ENCODE measurements at regions of chr19 and their contacts with region 1.

Region 1: GRCh38 chr19:37655689-37656371 is 565 bp upstream of the ZFP30 start:
- DNase-seq: peak; percentile 80
- ATAC-seq: peak; percentile 88
- H3K4me3 ChIP-seq: peak overlapping the region; percentile 87 to 97 (median 93)
- H3K27ac ChIP-seq: peak overlapping the region; percentile 94
- H3K4me1 ChIP-seq: peaks cover 15% of the 10 kb centered on the region
- H3K27me3 ChIP-seq: no peaks in the 10 kb centered on the region; a peak in 1 of 5 replicates
- CTCF ChIP-seq: peak; percentile 39
- EP300 ChIP-seq: no peak
- POLR2A ChIP-seq: peak; percentile 63 to 74
- RAD21 ChIP-seq: no peak

Region 2: DNA sequence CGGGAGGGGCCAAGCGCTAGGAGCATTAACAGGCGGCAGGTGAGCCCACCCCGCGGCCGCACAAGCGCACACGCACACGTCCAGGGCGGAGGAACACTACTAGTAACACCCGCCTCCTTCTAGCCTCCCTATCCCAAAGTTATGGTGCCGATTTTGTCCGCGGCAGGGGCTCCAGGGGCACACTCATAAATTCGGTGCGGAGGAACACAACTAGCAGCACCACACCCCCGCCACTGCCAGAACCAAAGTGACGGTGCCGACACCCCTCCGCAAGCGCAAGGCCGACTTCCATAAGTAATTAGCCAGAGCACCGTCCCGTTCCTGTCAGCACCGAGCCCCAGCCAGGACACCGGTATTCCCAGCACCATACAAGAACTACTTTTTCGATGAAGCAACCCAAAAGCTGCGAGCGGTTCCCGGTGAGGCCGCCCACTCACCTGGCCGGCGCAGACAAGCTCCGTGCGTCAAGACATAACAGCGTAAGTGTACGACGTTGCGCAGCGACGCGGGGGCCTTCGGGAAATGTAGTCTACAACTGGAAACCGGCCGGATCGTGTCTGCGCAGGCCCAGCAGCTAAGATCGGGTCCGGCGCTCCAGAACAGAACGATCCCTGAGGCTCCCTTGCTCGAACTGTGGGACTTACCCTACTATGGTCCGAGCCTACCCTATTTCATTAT is 61.4 kb before region 1 on chr19 and contains the starts of genes ZNF540 and ZNF571:
- CTCF ChIA-PET with region 1: no interaction called
- POLR2A ChIA-PET with region 1: interaction called, 11 read pairs
- in situ Hi-C with region 1: no loop called
- intact Hi-C with region 1: loop called (anchors 5 kb)
- DNase-seq: peak; percentile 90
- ATAC-seq: peak; percentile 99
- H3K4me3 ChIP-seq: peak within 1 kb of the TSS; percentile 70 to 96 (median 88)
- H3K27ac ChIP-seq: peak within 1 kb of the TSS; percentile 73
- H3K4me1 ChIP-seq: peaks cover 14% of the 10 kb centered on the region; the same call in 1 of the 2 replicates
- H3K27me3 ChIP-seq: no peaks in the 10 kb centered on the region; a peak in 1 of 5 replicates
- CTCF ChIP-seq: no peak
- EP300 ChIP-seq: no peak
- POLR2A ChIP-seq: peak; percentile 48 to 57
- RAD21 ChIP-seq: no peak
- total RNA-seq, gene ZNF540: 0.21 and 0.40 TPM in 2 replicates
- total RNA-seq, gene ZNF571: 1.9 and 4.0 TPM in 2 replicates

Region 3: DNA sequence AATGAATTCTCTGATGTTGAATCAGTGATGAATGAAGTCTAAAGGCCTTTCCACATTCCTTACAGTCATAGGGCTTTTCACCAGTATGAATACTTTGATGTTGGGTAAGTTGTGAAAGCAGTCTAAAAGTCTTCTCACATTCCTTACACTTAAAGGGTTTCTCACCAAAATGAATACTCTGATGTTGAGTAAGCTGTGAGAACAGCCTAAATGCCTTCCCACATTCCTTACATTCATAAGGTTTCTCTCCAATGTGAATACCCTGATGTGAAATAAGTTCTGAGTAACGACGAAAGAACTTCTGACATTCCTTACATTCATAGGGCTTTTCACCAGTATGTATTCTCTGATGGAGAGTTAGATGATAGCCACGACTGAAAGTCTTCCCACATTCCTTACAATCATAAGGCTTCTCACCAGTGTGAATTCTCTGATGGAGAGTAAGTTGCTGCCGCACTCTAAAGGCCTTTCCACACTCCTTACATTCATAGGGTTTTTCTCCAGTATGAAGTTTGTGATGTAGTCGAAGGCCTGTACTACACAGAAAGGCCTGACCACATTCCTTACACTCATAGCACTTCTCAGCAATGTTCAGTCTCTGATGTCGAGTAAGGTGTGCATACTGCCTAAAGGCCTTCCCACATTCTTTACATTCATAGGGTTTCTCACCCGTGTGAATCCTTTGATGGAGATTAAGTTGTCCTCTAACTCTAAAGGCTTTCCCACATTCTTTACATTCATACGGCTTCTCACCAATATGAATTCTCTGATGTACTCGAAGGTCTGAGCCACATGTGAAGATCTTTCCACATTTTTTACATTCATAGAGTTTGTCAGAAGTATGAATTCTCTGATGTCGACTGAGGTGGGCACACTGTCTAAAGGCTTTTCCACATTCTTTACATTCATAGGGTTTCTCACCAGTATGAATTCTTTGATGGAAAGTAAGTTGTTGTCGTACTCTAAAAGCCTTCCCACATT is 20.5 kb before region 1 on chr19:
- CTCF ChIA-PET with region 1: no interaction called
- POLR2A ChIA-PET with region 1: no interaction called
- in situ Hi-C with region 1: no loop called
- intact Hi-C with region 1: no loop called
- DNase-seq: no peak
- ATAC-seq: no peak
- H3K4me3 ChIP-seq: no peak overlapping the region
- H3K27ac ChIP-seq: no peak overlapping the region
- H3K4me1 ChIP-seq: no peaks in the 10 kb centered on the region
- H3K27me3 ChIP-seq: no peaks in the 10 kb centered on the region
- CTCF ChIP-seq: no peak
- EP300 ChIP-seq: no peak
- POLR2A ChIP-seq: no peak
- RAD21 ChIP-seq: no peak

Region 4: DNA sequence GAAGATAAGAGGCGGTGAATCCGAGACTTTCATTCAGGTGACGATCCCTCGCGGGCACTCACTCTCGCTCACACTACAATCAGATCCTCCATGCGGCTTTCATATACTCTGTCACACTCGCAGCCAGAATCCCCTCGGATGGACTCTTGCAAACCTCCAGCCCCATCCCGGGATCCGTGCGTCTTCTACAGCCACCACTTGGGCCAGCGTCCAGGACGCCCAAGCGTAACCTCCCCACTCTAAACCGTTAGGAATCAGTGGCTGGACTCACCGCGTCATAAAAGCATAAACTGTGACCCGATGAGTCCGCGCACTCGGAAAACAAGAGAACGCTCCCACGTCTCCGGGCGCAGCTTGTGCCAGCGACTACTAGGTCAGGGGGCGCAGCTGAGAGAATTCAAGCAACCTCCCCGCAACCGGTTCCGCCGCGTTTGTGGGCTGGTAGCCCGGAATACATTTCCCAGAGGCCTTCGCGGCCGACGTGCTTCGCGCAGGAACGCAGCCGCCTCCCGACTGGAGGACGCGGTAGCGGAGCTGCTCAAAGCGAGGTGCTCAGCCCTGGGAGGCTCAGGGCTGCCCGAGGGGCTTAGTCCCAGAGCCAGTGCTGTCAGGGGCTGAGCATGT is 36.2 kb after region 1 on chr19:
- CTCF ChIA-PET with region 1: no interaction called
- POLR2A ChIA-PET with region 1: interaction called, 8 read pairs
- in situ Hi-C with region 1: no loop called
- intact Hi-C with region 1: loop called (anchors 1 kb)
- DNase-seq: peak; percentile 87
- ATAC-seq: peak; percentile 97
- H3K4me3 ChIP-seq: peak overlapping the region; percentile 71 to 79 (median 78)
- H3K27ac ChIP-seq: peak overlapping the region; percentile 84
- H3K4me1 ChIP-seq: peaks cover 10% of the 10 kb centered on the region; the same call in 1 of the 2 replicates
- H3K27me3 ChIP-seq: no peaks in the 10 kb centered on the region; a peak in 1 of 5 replicates
- CTCF ChIP-seq: peak; percentile 69
- EP300 ChIP-seq: no peak
- POLR2A ChIP-seq: peak; percentile 61 to 90
- RAD21 ChIP-seq: peak; percentile 45; the same call in 1 of the 2 replicates

Region 5: GRCh38 chr19:37725181-37725580 is 69.4 kb after region 1 on chr19:
- CTCF ChIA-PET with region 1: no interaction called
- POLR2A ChIA-PET with region 1: no interaction called
- in situ Hi-C with region 1: no loop called
- intact Hi-C with region 1: no loop called
- DNase-seq: no peak
- ATAC-seq: no peak
- H3K4me3 ChIP-seq: no peak overlapping the region
- H3K27ac ChIP-seq: no peak overlapping the region
- H3K4me1 ChIP-seq: no peaks in the 10 kb centered on the region
- H3K27me3 ChIP-seq: no peaks in the 10 kb centered on the region
- CTCF ChIP-seq: no peak
- EP300 ChIP-seq: no peak
- POLR2A ChIP-seq: no peak
- RAD21 ChIP-seq: no peak

Region 6: DNA sequence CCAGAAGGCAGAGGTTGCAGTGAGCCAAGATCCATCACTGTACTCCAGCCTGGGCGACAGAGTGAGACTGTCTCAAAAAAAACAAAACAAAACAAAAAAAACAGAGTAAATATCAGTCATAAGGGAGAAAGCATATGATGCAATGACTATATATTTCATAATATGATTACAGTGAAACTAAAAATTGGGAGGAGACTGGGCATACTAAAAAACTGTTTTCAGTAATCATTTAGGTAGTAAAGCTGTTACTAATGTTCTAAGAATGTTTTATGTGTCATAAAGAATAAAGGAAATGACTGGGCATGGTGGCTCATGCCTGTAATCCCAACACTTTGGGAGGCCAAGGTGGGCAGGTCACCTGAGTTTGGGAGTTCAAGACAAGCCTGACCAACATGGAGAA is 107.7 kb after region 1 on chr19:
- CTCF ChIA-PET with region 1: no interaction called
- POLR2A ChIA-PET with region 1: no interaction called
- in situ Hi-C with region 1: no loop called
- intact Hi-C with region 1: no loop called
- DNase-seq: no peak
- ATAC-seq: no peak
- H3K4me3 ChIP-seq: no peak overlapping the region
- H3K27ac ChIP-seq: no peak overlapping the region
- H3K4me1 ChIP-seq: no peaks in the 10 kb centered on the region
- H3K27me3 ChIP-seq: no peaks in the 10 kb centered on the region
- CTCF ChIP-seq: no peak
- EP300 ChIP-seq: no peak
- POLR2A ChIP-seq: no peak
- RAD21 ChIP-seq: no peak

Region 7: DNA sequence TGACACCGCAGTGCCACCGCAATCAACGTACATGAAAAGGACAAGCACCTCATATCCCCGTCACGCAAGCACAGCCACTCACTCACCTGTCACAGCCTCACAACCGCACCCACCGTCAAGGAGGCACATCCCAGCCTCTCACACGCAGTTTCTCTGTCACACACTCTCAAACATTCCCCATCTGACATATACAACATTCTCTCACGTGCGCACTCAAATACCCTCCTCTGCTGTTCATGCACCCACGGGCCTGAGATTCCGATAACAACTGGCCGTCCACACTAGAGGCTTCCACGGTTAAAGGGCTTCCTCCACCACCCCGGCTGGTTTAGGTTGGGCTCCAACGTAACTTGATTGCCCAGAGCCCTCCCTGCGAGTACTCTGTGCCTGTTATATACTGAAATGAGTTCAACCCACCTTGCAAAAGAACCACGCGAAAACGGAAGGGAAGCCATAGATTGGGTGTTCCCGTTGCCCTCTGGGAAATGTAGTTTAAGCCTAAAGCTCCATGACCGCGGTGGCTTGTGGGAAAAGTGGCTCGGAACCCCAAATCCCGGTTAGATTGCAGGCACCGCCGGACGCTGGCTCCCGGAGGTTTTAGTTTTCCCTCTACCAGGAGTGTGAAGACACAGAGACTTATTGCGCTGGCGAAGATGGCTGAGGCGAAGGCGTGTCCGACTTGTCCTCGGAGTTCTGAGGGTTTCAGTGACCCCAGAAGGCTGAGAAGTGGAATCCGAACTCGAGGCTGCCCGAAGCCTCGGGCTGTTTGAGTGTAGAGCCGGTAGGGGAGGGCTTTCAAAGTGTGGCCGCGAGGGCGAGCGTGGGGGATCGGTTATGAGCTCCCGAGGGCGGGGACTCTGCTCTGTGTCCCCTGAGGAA is 123.5 kb after region 1 on chr19 and contains the start of gene ZNF573:
- CTCF ChIA-PET with region 1: no interaction called
- POLR2A ChIA-PET with region 1: interaction called, 4 read pairs
- in situ Hi-C with region 1: no loop called
- intact Hi-C with region 1: loop called (anchors 1 kb)
- DNase-seq: peak; percentile 88
- ATAC-seq: peak; percentile 96
- H3K4me3 ChIP-seq: peak within 1 kb of the TSS; percentile 94 to 96 (median 96)
- H3K27ac ChIP-seq: peak within 1 kb of the TSS; percentile 86
- H3K4me1 ChIP-seq: no peaks in the 10 kb centered on the region
- H3K27me3 ChIP-seq: no peaks in the 10 kb centered on the region; a peak in 1 of 5 replicates
- CTCF ChIP-seq: no peak
- EP300 ChIP-seq: peak in 1 of 2 experiments; percentile 11; a peak in 1 of 4 replicates
- POLR2A ChIP-seq: peak; percentile 69 to 84
- RAD21 ChIP-seq: no peak
- total RNA-seq, gene ZNF573: 9.3 and 16.0 TPM in 2 replicates

Measured in HepG2 (cell line).